Activated naive CD4-positive, alpha-beta T cell treated with anti-CD3 and anti-CD28 coated beads for 36 hours (primary cell): ENCODE measurements at regions of chr4 and their contacts with region 1.

Region 1: DNA sequence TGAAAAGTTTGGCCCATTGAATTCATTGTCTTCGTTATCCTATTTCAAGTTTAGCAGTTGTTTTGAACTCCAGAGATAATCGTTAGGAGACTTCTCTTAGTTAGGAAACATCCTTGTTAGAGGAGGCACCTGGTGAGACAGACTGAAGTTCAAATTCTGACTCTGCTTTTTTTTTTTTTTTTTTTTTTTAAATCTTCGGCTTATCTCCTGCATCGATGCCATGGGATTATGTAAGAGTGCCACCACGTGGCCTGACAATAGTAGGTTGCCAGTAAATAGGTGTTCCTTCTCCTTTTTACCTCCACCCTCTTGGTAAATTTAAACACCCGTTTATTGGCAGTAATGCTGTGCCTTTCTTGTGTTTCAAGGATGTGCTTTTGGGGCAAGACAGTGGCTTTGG is 149.3 kb downstream of the SOWAHB start:
- DNase-seq: peak; percentile 68
- H3K4me3 Mint-ChIP-seq: no peak overlapping the region
- H3K27ac Mint-ChIP-seq: no peak overlapping the region
- H3K4me1 Mint-ChIP-seq: peaks cover 2% of the 10 kb centered on the region
- H3K27me3 Mint-ChIP-seq: peaks cover 18% of the 10 kb centered on the region

Region 2: GRCh38 chr4:75584067-75584466 is 1164.6 kb before region 1 on chr4:
- CTCF ChIA-PET with region 1: no interaction called
- intact Hi-C with region 1: no loop called
- DNase-seq: no peak
- H3K4me3 Mint-ChIP-seq: no peak overlapping the region
- H3K27ac Mint-ChIP-seq: no peak overlapping the region
- H3K4me1 Mint-ChIP-seq: no peaks in the 10 kb centered on the region
- H3K27me3 Mint-ChIP-seq: peaks cover 6% of the 10 kb centered on the region

Region 3: GRCh38 chr4:76511947-76512346 is 236.7 kb before region 1 on chr4:
- CTCF ChIA-PET with region 1: interaction called, 4 read pairs
- intact Hi-C with region 1: loop called (anchors 1 kb)
- DNase-seq: no peak
- H3K4me3 Mint-ChIP-seq: no peak overlapping the region
- H3K27ac Mint-ChIP-seq: no peak overlapping the region
- H3K4me1 Mint-ChIP-seq: no peaks in the 10 kb centered on the region
- H3K27me3 Mint-ChIP-seq: peaks cover 2% of the 10 kb centered on the region